ENCODE measurements at regions of chr2 and their contacts with region 1.

Region 1: DNA sequence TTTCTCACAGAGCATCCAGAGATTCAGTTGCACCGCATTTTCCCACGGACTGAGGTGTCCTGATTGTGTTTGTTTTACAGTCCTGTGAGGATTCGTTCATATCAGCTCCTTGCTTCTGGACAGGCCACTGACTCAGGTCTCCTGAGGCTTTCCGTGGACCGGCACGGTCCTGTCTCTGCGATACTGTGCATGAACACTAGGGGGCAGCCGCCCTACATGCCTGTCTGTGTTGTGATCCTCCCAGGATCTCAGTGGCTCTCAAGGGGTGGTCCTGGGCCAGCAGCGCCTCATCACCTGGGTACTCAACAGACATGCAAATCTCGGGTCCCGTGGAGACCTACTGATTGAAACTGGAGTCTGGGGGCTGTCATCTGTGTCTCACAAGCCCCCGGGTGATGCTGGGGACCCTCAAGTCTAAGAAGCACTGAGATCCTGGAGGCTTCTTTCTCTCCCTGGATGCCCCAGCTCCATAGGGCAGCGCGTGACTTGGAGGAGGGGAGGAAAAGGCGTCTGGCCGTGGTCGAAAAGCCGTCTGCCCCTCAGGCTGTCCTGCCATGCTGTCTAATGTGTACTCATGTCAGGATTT is 28.9 kb downstream of the IL1R2 start:
- DNase-seq: no peak
- ATAC-seq: peak; percentile 80
- H3K4me3 ChIP-seq: no peak overlapping the region
- H3K27ac ChIP-seq: no peak overlapping the region
- H3K4me1 ChIP-seq: peaks cover 7% of the 10 kb centered on the region
- H3K27me3 ChIP-seq: no peaks in the 10 kb centered on the region
- CTCF ChIP-seq: peak; percentile 93 to 98 (median 97); a peak in 5 of 6 replicates
- EP300 ChIP-seq: no peak
- POLR2A ChIP-seq: no peak
- RAD21 ChIP-seq: peak; percentile 92

Region 2: GRCh38 chr2:101998896-101999789 is 21.5 kb before region 1 on chr2:
- CTCF ChIA-PET with region 1: interaction called, 76 read pairs
- POLR2A ChIA-PET with region 1: interaction called, 3 read pairs
- RAD21 ChIA-PET with region 1: interaction called, 23 read pairs
- SMC1A ChIA-PET with region 1: interaction called, 39 read pairs
- in situ Hi-C with region 1: no loop called
- intact Hi-C with region 1: no loop called
- DNase-seq: no peak
- ATAC-seq: peak; percentile 71
- H3K4me3 ChIP-seq: no peak overlapping the region
- H3K27ac ChIP-seq: peak overlapping the region; percentile 50; the same call in 1 of the 2 replicates
- H3K4me1 ChIP-seq: peaks cover 6% of the 10 kb centered on the region
- H3K27me3 ChIP-seq: no peaks in the 10 kb centered on the region; a peak in 2 of 4 replicates
- CTCF ChIP-seq: no peak; a peak in 1 of 6 replicates
- EP300 ChIP-seq: 0 out of 4 replicates have a peak, but pooled peaks of 1 of the 2 experiments have one; percentile 13
- POLR2A ChIP-seq: no peak
- RAD21 ChIP-seq: no peak

Region 3: DNA sequence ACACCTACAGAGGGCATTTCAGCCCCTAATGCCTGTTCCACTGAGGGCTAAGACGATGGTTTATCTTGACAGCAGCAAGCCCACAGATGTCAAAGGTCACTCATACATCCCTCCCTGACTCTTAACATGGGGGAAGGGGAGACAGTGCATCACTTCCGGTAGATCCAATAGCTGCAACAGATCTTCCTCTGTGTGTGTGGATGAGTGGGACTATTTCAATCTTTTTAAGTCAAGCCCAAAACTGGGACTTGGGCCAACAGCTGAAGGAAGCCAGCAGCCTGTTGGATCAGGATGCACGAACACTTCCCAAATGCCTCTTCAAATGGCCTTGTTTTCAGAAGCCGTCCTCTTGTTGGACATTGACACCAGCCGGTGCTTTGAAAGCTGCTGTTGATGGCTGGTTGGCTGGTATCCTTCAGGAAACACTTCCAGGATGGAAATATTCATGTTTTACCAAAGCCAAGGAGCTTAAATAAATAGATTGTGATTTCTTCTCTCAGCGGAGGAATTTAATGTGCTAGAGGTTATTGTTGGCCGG is 30.2 kb after region 1 on chr2:
- CTCF ChIA-PET with region 1: interaction called, 28 read pairs
- POLR2A ChIA-PET with region 1: interaction called, 10 read pairs
- RAD21 ChIA-PET with region 1: interaction called, 77 read pairs
- SMC1A ChIA-PET with region 1: interaction called, 97 read pairs
- in situ Hi-C with region 1: no loop called
- intact Hi-C with region 1: no loop called
- DNase-seq: no peak
- ATAC-seq: peak; percentile 42; the same call in 2 of the 3 replicates
- H3K4me3 ChIP-seq: no peak overlapping the region
- H3K27ac ChIP-seq: no peak overlapping the region
- H3K4me1 ChIP-seq: no peaks in the 10 kb centered on the region
- H3K27me3 ChIP-seq: no peaks in the 10 kb centered on the region
- CTCF ChIP-seq: no peak
- EP300 ChIP-seq: no peak
- POLR2A ChIP-seq: no peak
- RAD21 ChIP-seq: no peak

Region 4: GRCh38 chr2:102074152-102074783 is 53.6 kb after region 1 on chr2:
- CTCF ChIA-PET with region 1: interaction called, 7 read pairs
- POLR2A ChIA-PET with region 1: no interaction called
- RAD21 ChIA-PET with region 1: interaction called, 34 read pairs
- SMC1A ChIA-PET with region 1: interaction called, 108 read pairs
- in situ Hi-C with region 1: no loop called
- intact Hi-C with region 1: no loop called
- DNase-seq: no peak
- ATAC-seq: peak; percentile 74
- H3K4me3 ChIP-seq: no peak overlapping the region
- H3K27ac ChIP-seq: no peak overlapping the region
- H3K4me1 ChIP-seq: 0 out of 2 replicates have a peak, but pooled peaks cover 4% of the 10 kb centered on the region
- H3K27me3 ChIP-seq: no peaks in the 10 kb centered on the region
- CTCF ChIP-seq: 0 out of 6 replicates have a peak, but pooled peaks of 2 of the 3 experiments have one; percentile 8
- EP300 ChIP-seq: no peak
- POLR2A ChIP-seq: no peak
- RAD21 ChIP-seq: no peak

Region 5: DNA sequence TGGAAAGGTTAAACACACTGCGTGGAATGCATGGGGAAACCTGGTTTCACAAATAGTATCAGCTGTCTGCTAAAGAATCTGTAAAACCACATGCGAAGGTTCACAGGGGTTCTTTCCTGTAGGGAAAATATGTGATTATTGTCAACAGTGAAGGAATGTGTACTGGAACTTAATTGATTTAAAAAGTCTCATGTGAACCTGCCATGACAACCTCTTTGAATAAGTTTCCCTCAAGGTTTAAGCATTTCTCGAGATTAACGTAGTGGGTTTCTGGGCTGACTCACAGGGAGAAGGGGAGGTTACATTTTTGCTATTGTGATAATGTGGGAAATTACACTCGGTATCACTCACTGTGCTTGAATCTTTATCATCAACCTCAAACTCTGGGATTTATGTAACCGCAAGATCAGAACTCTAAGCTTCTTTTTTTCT is 93.6 kb after region 1 on chr2:
- CTCF ChIA-PET with region 1: interaction called, 31 read pairs
- POLR2A ChIA-PET with region 1: interaction called, 5 read pairs
- RAD21 ChIA-PET with region 1: interaction called, 115 read pairs
- SMC1A ChIA-PET with region 1: interaction called, 30 read pairs
- in situ Hi-C with region 1: no loop called
- intact Hi-C with region 1: no loop called
- DNase-seq: peak; percentile 33
- ATAC-seq: peak; percentile 67
- H3K4me3 ChIP-seq: no peak overlapping the region
- H3K27ac ChIP-seq: peak overlapping the region; percentile 17; the same call in 1 of the 2 replicates
- H3K4me1 ChIP-seq: peaks cover 14% of the 10 kb centered on the region
- H3K27me3 ChIP-seq: no peaks in the 10 kb centered on the region
- CTCF ChIP-seq: no peak
- EP300 ChIP-seq: no peak
- POLR2A ChIP-seq: no peak
- RAD21 ChIP-seq: no peak

Region 6: DNA sequence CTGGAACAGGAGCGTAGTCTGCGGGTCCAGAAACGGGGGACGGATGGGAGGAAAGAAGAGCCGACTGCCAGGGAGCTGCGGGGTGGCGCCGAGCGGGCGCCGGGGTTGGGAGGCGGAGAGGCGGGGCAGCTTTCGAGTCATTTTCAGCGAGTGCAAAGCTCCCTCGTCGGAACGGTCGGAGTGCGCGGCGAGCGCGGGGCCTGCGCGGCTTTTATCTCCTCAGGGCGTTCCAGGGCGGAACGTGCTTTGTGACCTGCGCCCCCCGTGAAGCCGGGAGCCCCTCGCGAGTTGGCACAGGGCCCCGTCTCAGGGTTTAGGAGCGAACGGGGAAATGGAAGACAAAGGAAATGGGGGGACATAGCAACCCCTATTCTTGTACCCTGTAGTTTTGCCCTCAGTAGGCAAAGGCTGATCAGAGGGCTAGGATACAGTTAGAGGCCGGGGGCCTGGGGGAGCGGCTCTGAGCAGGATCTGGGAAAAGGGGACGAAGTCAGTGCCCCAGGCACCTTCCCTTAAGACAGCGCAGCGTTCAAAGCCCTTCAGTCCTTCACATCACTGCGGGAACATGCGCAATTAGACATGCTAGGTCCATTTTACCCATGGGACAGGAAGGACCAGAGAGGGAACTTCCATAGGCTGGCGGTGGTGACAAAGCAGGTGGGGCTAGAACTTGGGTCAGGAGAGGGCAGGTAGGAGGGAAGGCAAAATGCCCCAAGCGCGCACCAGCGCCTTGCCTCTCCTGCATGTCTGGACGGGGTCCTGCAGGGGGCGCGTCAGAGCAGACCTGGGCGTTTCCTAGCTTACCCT is 230.6 kb after region 1 on chr2:
- CTCF ChIA-PET with region 1: interaction called, 11 read pairs
- POLR2A ChIA-PET with region 1: no interaction called
- RAD21 ChIA-PET with region 1: interaction called, 4 read pairs
- SMC1A ChIA-PET with region 1: interaction called, 14 read pairs
- in situ Hi-C with region 1: no loop called
- intact Hi-C with region 1: no loop called
- DNase-seq: no peak
- ATAC-seq: peak; percentile 80
- H3K4me3 ChIP-seq: no peak overlapping the region
- H3K27ac ChIP-seq: no peak overlapping the region
- H3K4me1 ChIP-seq: no peaks in the 10 kb centered on the region
- H3K27me3 ChIP-seq: no peaks in the 10 kb centered on the region; a peak in 1 of 4 replicates
- CTCF ChIP-seq: peak; percentile 58 to 63 (median 60)
- EP300 ChIP-seq: no peak
- POLR2A ChIP-seq: no peak
- RAD21 ChIP-seq: 0 out of 2 replicates have a peak, but pooled peaks have one; percentile 25

Region 7: GRCh38 chr2:102442967-102443828 is 422.5 kb after region 1 on chr2:
- CTCF ChIA-PET with region 1: interaction called, 15 read pairs
- POLR2A ChIA-PET with region 1: no interaction called
- RAD21 ChIA-PET with region 1: interaction called, 5 read pairs
- SMC1A ChIA-PET with region 1: interaction called, 8 read pairs
- in situ Hi-C with region 1: loop called (anchors 5 kb)
- intact Hi-C with region 1: loop called (anchors 2 kb)
- DNase-seq: no peak
- ATAC-seq: peak; percentile 93
- H3K4me3 ChIP-seq: no peak overlapping the region
- H3K27ac ChIP-seq: no peak overlapping the region
- H3K4me1 ChIP-seq: 0 out of 2 replicates have a peak, but pooled peaks cover 3% of the 10 kb centered on the region
- H3K27me3 ChIP-seq: no peaks in the 10 kb centered on the region
- CTCF ChIP-seq: peak; percentile 70 to 88 (median 86)
- EP300 ChIP-seq: no peak
- POLR2A ChIP-seq: no peak
- RAD21 ChIP-seq: peak; percentile 96